ENCODE measurements at regions of chr6 and their contacts with region 1.

Region 1: GRCh38 chr6:42726485-42727086 is 4.2 kb upstream of the PRPH2 start:
- DNase-seq: peak in 1 of 2 experiments; percentile 54
- H3K4me3 ChIP-seq: no peak overlapping the region
- H3K27ac ChIP-seq: no peak overlapping the region
- H3K4me1 ChIP-seq: no peaks in the 10 kb centered on the region
- H3K27me3 ChIP-seq: no peaks in the 10 kb centered on the region
- CTCF ChIP-seq: peak; percentile 70 to 90 (median 89)
- EP300 ChIP-seq: no peak
- POLR2A ChIP-seq: no peak
- RAD21 ChIP-seq: peak; percentile 95 to 97

Region 2: DNA sequence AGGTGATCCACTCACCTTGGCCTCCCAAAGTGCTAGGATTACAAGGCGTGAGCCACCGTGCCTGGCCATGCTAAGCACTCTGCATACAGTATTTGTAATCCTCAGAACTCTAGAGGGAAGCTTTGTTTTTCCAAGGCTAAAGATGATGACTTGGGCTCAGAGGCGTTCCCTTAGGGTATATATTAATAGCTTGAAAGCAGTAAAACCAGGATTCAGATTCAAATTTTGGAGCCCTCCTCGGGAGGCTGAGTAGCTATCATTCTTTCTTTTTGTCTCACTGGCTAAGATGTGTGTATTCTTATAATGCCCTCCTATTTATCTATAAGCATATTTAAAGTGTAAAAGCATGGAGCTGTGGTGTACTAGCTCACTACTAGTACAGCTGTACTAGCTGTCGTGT is 72.7 kb before region 1 on chr6:
- CTCF ChIA-PET with region 1: interaction called, 87 read pairs
- POLR2A ChIA-PET with region 1: interaction called, 3 read pairs
- DNase-seq: no peak
- H3K4me3 ChIP-seq: no peak overlapping the region
- H3K27ac ChIP-seq: no peak overlapping the region
- H3K4me1 ChIP-seq: no peaks in the 10 kb centered on the region
- H3K27me3 ChIP-seq: no peaks in the 10 kb centered on the region
- CTCF ChIP-seq: no peak
- EP300 ChIP-seq: no peak
- POLR2A ChIP-seq: no peak
- RAD21 ChIP-seq: no peak

Region 3: DNA sequence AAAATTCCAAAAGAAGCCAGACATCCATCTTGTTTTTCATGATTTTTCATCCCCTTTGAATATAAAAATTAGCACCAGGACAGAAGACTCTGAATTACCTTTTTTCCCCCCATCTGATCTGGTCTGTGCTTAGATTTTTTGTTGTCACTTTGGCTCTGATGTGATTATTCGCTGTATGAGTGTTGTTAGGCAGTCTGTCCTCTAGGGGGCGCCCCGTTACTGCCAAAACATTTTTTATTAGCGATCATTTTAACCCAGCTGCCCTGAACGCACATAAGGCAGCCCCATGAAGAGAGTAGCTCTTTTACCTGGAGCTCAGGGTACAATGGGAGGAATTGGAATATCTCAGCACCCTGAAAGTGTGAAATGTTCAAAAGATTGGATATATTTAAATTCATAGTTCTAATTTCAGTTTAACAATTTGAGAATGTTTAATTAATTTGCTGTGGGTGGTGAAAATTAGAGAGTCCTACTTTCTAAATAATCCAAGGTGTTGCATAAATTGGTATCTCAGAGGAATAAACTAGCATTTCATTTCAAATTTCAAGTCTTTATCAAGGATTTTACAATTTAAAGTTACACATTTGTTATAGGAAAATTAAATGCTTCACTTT is 64.9 kb before region 1 on chr6:
- CTCF ChIA-PET with region 1: interaction called, 87 read pairs
- POLR2A ChIA-PET with region 1: no interaction called
- DNase-seq: peak; percentile 13 to 91
- H3K4me3 ChIP-seq: no peak overlapping the region
- H3K27ac ChIP-seq: no peak overlapping the region
- H3K4me1 ChIP-seq: no peaks in the 10 kb centered on the region
- H3K27me3 ChIP-seq: no peaks in the 10 kb centered on the region
- CTCF ChIP-seq: peak; percentile 16 to 88 (median 79)
- EP300 ChIP-seq: no peak
- POLR2A ChIP-seq: no peak
- RAD21 ChIP-seq: peak; percentile 85 to 92

Region 4: DNA sequence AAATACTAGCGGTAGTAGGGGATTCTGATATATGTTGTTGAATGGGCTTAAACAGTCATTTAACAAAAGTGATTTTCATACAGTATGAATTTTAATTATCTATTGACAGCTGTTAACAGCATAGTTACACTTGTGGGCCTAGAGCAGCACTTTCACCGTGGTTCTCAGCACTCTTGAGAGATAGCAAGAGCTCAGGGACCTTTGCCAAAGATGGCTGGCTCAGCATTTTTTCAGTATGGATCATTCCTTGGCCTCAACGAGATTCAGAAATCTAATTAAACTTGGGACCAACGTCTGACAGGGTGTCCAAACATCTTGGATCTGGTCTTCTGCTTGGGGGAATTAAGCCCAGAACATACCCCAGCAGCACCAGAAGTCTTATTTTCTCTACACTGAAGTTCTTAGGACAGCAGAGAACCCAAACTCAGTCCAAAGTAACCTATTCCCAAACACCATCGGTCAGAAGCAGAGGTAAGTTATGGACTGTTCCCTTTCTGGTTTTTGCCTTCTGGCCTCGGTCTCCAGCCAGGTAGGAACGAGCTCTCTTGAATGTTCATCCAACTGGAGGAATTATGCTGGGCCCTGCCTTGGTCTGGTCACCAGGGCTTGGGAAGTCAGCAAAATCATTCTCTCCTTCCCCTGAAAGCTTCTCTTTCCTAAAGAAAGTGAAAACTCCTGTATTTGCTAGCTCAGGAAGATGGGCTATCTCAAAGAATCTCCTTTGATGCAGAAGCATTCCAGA is 29.9 kb before region 1 on chr6:
- CTCF ChIA-PET with region 1: interaction called, 41 read pairs
- POLR2A ChIA-PET with region 1: no interaction called
- DNase-seq: no peak
- H3K4me3 ChIP-seq: no peak overlapping the region
- H3K27ac ChIP-seq: no peak overlapping the region
- H3K4me1 ChIP-seq: no peaks in the 10 kb centered on the region
- H3K27me3 ChIP-seq: no peaks in the 10 kb centered on the region
- CTCF ChIP-seq: no peak
- EP300 ChIP-seq: no peak
- POLR2A ChIP-seq: no peak
- RAD21 ChIP-seq: no peak

Region 5: DNA sequence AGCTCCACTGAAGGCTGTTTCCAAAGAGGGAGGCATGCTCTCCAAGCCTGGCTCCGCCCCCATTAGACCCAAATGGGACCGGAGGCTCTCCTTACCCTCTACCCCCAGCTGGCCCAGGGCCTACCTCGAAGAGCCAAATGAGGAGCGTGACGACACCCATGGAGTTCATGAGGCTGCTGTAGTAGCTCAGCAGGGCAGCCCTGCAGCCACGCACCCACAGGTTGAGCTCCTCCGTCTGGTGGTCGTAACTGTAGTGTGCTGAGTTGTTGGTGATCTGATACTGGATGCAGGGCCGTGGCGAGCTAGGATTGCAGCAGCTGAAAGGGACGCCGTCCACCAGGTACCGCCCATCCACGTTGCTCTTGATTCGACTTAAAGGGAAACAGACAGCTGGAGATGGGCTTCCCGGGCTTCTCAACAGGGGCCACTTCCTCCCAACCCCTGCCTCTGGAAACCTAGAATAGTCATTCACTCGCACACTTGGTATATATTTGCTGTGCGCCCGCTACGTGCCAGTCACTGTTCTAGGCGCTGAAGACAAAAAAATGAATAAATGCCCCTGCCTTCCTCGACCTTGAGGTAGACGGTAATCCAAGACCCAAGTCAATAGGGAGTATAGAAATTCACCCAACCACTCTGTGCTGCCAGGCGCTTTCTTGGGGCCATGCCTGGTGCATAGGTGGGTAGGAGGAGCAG is 22.2 kb before region 1 on chr6:
- CTCF ChIA-PET with region 1: interaction called, 41 read pairs
- POLR2A ChIA-PET with region 1: interaction called, 6 read pairs
- DNase-seq: peak in 1 of 2 experiments; percentile 57
- H3K4me3 ChIP-seq: peak overlapping the region in 2 of 4 experiments; percentile 2 to 43; a peak in 3 of 8 replicates
- H3K27ac ChIP-seq: no peak overlapping the region
- H3K4me1 ChIP-seq: peaks cover 0 to 6% (median 1%) of the 10 kb centered on the region in 4 experiments; a peak in 3 of 7 replicates
- H3K27me3 ChIP-seq: no peaks in the 10 kb centered on the region
- CTCF ChIP-seq: no peak
- EP300 ChIP-seq: no peak
- POLR2A ChIP-seq: peak in 1 of 2 experiments; percentile 63; a peak in 2 of 3 replicates
- RAD21 ChIP-seq: no peak

Measured in H1 (cell line).